ENCODE measurements at regions of chr6 and their contacts with region 1.

Region 1: GRCh38 chr6:34414999-34415858 is 10.6 kb downstream of the RPS10 start:
- DNase-seq: peak in 1 of 3 donors; percentile 84
- ATAC-seq: peak; percentile 96
- H3K4me3 ChIP-seq: no peak overlapping the region
- H3K4me1 ChIP-seq: peaks cover 7% of the 10 kb centered on the region
- CTCF ChIP-seq: peak; percentile 40

Region 2: GRCh38 chr6:34196126-34196830 is 219.0 kb before region 1 on chr6:
- intact Hi-C with region 1: loop called (anchors 1 to 10 kb)
- DNase-seq: peak; percentile 88 to 92 (median 91)
- ATAC-seq: peak; percentile 99
- H3K4me3 ChIP-seq: no peak overlapping the region
- H3K4me1 ChIP-seq: peaks cover 4% of the 10 kb centered on the region
- CTCF ChIP-seq: peak; percentile 93

Region 3: GRCh38 chr6:34248727-34249551 is 166.3 kb before region 1 on chr6 and contains the start of gene SMIM29:
- intact Hi-C with region 1: loop called (anchors 10 kb)
- DNase-seq: peak; percentile 97 to 99 (median 98)
- ATAC-seq: peak; percentile 95
- H3K4me3 ChIP-seq: peak within 1 kb of the TSS; percentile 35
- H3K4me1 ChIP-seq: peaks cover 12% of the 10 kb centered on the region
- CTCF ChIP-seq: peak; percentile 94
- total RNA-seq, gene SMIM29: 6.5 to 15.1 (median 11.2) TPM